ENCODE measurements at regions of chr1 and their contacts with region 1.

Region 1: GRCh38 chr1:175023043-175023921 is at the start of gene MRPS14:
- DNase-seq: peak; percentile 99
- ATAC-seq: peak; percentile 92
- H3K4me3 Mint-ChIP-seq: peak within 1 kb of the TSS; percentile 87
- H3K27ac Mint-ChIP-seq: peak within 1 kb of the TSS; percentile 92
- H3K4me1 Mint-ChIP-seq: peaks cover 25% of the 10 kb centered on the region
- H3K27me3 Mint-ChIP-seq: no peaks in the 10 kb centered on the region
- total RNA-seq, gene MRPS14: 38.7 to 43.7 TPM

Region 2: GRCh38 chr1:175005085-175005783 is 18.0 kb before region 1 on chr1:
- CTCF ChIA-PET with region 1: interaction called, 24 read pairs
- POLR2A ChIA-PET with region 1: interaction called, 65 read pairs
- intact Hi-C with region 1: loop called in 1 of 2 experiments (anchors 1 kb)
- DNase-seq: peak; percentile 44
- ATAC-seq: peak; percentile 49
- H3K4me3 Mint-ChIP-seq: peak overlapping the region; percentile 4
- H3K27ac Mint-ChIP-seq: peak overlapping the region; percentile 88
- H3K4me1 Mint-ChIP-seq: peaks cover 57% of the 10 kb centered on the region
- H3K27me3 Mint-ChIP-seq: no peaks in the 10 kb centered on the region

Region 3: GRCh38 chr1:175146529-175147213 is 123.4 kb after region 1 on chr1:
- CTCF ChIA-PET with region 1: interaction called, 14 read pairs
- POLR2A ChIA-PET with region 1: interaction called, 4 read pairs
- intact Hi-C with region 1: loop called in 1 of 2 experiments (anchors 5 kb)
- DNase-seq: peak; percentile 84
- ATAC-seq: peak; percentile 89
- H3K4me3 Mint-ChIP-seq: no peak overlapping the region
- H3K27ac Mint-ChIP-seq: no peak overlapping the region
- H3K4me1 Mint-ChIP-seq: peaks cover 6% of the 10 kb centered on the region
- H3K27me3 Mint-ChIP-seq: peaks cover 15% of the 10 kb centered on the region

Region 4: GRCh38 chr1:175208773-175209492 is 185.7 kb after region 1 on chr1:
- CTCF ChIA-PET with region 1: no interaction called
- POLR2A ChIA-PET with region 1: no interaction called
- intact Hi-C with region 1: loop called in 1 of 2 experiments (anchors 5 kb)
- DNase-seq: peak; percentile 58
- ATAC-seq: peak; percentile 60
- H3K4me3 Mint-ChIP-seq: peak overlapping the region; percentile 55
- H3K27ac Mint-ChIP-seq: peak overlapping the region; percentile 94
- H3K4me1 Mint-ChIP-seq: peaks cover 63% of the 10 kb centered on the region
- H3K27me3 Mint-ChIP-seq: no peaks in the 10 kb centered on the region

Region 5: DNA sequence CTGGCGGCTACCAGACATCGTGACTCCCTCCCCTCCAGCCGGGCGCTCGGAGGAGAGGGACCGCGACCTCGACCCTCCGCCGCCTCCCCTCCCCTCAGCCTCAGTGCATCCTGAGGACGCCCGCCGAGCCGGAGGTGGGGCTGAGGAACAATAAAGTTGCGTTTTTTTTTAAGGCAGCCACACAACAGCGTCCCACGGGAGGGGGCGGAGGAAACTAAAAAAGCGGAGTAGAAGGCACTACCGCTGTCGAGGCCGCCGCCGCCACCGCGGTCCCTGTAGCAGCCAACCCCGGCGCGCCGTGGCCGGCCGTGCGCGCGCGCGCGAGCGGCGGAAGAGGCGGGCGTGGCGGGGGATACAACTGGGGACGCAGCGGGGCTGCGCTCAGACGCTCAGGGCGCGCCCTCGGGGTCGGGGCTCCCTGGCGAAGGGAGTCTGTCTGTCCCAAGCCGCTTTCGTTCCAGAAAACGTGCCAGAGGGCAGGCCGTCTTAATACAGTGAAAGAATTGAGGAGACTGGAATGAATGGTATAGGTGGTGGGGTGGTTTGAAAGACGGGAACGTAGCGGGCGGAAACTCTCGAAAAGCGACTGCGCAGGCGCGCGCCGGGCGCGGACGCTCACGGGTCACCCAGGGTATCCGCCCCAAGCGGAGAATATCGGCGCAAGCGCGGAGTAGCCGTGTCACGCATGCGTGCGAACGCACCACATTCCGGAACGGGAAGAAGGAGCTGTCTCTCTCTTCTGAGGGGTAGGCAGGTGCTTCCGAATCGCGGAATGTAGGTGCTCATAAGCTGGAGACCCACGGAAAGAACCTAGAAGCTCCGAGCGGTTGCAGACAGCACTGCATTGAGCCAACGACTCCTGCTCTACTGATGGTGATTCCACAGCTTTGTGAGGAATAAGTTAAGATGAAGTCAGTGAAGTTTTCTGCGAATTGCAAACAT is 1184.0 kb after region 1 on chr1 and contains the start of gene COP1:
- CTCF ChIA-PET with region 1: no interaction called
- POLR2A ChIA-PET with region 1: interaction called, 3 read pairs
- intact Hi-C with region 1: loop called in 1 of 2 experiments (anchors 1 kb)
- DNase-seq: peak; percentile 97
- ATAC-seq: peak; percentile 82
- H3K4me3 Mint-ChIP-seq: peak within 1 kb of the TSS; percentile 98
- H3K27ac Mint-ChIP-seq: peak within 1 kb of the TSS; percentile 100
- H3K4me1 Mint-ChIP-seq: peaks cover 28% of the 10 kb centered on the region
- H3K27me3 Mint-ChIP-seq: no peaks in the 10 kb centered on the region
- total RNA-seq, gene COP1: 38.7 to 43.4 TPM

Measured in activated CD4-positive, alpha-beta T cell treated with anti-CD3 and anti-CD28 coated beads for 36 hours (primary cell).